ENCODE measurements at regions of chr17 and their contacts with region 1.

Region 1: DNA sequence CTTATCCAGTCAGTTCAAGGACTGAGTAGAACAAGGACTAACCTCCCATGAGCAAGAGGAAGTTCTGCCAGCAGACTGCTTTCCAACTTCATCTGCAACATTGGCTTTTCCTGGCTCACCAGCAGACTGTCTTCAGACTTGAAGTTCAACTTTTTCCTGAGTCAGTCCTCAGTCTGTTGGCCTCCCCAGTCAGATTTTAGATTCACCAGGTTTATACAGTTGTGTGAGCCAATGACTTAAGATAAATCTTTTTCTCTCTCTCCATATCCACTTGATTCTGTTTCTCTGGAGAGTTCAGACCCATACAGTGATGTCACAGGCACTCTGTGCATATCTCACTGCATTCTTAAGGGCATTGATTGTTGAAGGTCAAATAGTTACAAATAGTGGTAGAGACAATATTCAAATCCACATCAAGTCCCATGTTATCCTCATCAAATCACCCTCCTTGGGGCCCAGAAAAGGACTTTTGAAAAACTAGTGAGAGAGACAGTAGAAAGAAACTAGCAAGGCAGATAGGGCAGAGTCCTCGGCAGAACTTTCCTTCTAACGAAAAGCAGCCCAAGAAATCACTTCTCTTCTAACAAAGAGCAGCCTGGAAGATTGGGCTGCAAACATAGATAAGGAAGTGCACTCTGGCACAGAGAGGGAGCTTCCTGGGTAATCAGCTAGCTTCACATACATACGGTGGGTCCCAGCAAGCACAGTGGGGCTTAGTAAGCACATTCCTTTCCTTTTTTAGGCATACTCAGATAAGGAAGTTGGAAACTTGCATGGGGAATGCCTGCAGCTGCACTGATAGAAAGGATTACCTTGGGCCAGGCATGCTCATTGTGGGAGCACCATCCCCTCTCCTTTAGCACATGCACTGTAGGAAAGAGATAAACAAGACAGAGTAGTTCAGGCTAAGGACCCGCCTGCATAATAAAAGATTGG is 132.3 kb upstream of the FAM20A start:
- DNase-seq: no peak
- H3K4me3 ChIP-seq: no peak overlapping the region
- H3K27ac ChIP-seq: no peak overlapping the region
- H3K4me1 ChIP-seq: peaks cover 2% of the 10 kb centered on the region
- H3K27me3 ChIP-seq: no peaks in the 10 kb centered on the region
- CTCF ChIP-seq: no peak

Region 2: GRCh38 chr17:68674029-68674940 is 59.2 kb before region 1 on chr17:
- CTCF ChIA-PET with region 1: no interaction called
- dilution Hi-C with region 1: loop called (anchors 5 kb)
- in situ Hi-C with region 1: no loop called
- intact Hi-C with region 1: no loop called
- DNase-seq: no peak
- H3K4me3 ChIP-seq: no peak overlapping the region
- H3K27ac ChIP-seq: no peak overlapping the region
- H3K4me1 ChIP-seq: peaks cover 2% of the 10 kb centered on the region
- H3K27me3 ChIP-seq: no peaks in the 10 kb centered on the region
- CTCF ChIP-seq: no peak

Region 3: DNA sequence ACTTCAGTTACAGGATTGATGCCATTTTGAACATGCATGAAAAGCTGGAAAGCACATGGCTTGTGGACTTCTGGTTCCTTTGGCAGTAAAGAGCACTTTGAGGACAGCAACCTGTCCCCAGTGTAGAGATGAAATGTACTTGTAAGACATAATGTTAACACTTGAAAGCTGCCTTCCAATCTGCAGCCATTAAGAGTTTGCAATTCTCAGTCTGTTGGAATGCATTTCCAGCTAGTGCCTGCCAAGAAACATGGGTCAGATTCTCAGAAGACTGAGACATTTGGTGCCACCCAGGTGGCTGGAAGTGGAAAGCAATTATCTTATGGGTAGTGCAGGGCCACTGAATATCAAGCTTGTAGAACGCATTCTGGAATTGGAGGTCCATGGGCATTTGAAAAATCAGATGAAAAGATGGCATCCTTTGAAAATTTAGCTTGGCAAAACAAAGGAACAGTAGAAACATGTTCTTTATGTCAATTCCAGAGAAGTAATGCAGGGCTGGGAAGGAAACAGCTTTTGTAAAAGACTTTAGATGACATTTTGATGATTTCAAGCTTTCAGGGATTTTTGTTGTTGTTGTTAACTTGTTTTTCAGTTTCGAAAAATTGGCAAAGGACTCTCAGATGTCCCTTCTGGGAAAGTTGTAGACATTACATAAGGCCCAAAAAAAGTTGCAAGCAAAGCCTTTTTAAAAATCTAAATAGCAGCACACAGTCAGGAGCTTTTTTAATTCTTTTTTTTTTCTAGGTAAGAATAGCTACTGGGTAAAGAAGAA is 74.7 kb after region 1 on chr17:
- CTCF ChIA-PET with region 1: no interaction called
- dilution Hi-C with region 1: loop called (anchors 10 kb)
- in situ Hi-C with region 1: no loop called
- intact Hi-C with region 1: no loop called
- DNase-seq: no peak
- H3K4me3 ChIP-seq: no peak overlapping the region
- H3K27ac ChIP-seq: no peak overlapping the region
- H3K4me1 ChIP-seq: no peaks in the 10 kb centered on the region
- H3K27me3 ChIP-seq: no peaks in the 10 kb centered on the region
- CTCF ChIP-seq: no peak

Measured in mammary epithelial cell (primary cell).